Ovary (tissue), 10 donors: ENCODE measurements at regions of chr19 and their contacts with region 1.

Region 1: GRCh38 chr19:34319785-34320184 is 45.2 kb upstream of the GPI start:
- DNase-seq: peak in 1 of 5 donors; percentile 32
- H3K4me3 ChIP-seq: no peak overlapping the region
- H3K27ac ChIP-seq: no peak overlapping the region
- H3K4me1 ChIP-seq: peaks cover 19% of the 10 kb centered on the region
- H3K27me3 ChIP-seq: no peaks in the 10 kb centered on the region
- CTCF ChIP-seq: no peak
- EP300 ChIP-seq: no peak
- POLR2A ChIP-seq: no peak

Region 2: DNA sequence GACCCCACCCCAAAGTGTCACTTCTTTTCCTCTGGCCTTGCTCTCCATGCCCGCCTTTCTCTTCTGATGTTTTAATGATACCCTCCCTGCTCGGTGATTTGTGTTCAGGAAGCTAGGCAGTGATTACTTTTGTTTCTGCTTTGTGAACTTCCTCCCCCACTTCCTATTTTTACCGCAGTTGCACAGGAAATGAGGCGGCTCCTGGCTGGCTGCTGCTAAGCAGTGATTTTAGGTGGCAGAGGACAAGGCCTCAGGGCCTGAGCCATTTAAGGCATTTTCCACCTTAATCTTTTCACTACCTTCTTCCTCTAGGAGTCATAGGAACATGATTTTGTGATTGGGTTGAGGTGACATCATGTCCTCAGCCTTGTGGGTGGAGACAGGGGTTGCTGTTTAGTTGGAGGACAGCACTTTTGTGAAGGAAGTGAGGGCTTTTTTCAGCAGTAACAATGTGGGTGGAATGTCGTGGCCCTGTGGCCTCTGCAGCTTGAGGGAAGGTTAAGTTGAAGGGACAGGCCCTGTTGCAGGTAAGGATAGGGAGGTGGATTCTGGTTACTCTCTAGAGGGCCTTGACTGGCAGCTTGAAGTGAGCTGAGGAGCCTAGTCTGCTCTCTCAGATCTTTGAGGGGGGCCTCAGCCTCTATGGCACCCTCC is 49.7 kb before region 1 on chr19:
- intact Hi-C with region 1: loop called in 1 of 4 experiments (anchors 10 kb)
- DNase-seq: peak in 3 of 5 donors; percentile 25 to 44 (median 38)
- H3K4me3 ChIP-seq: no peak overlapping the region
- H3K27ac ChIP-seq: no peak overlapping the region
- H3K4me1 ChIP-seq: peaks cover 14% of the 10 kb centered on the region
- H3K27me3 ChIP-seq: no peaks in the 10 kb centered on the region
- CTCF ChIP-seq: no peak
- EP300 ChIP-seq: no peak
- POLR2A ChIP-seq: no peak

Region 3: GRCh38 chr19:34332027-34332760 is 12.4 kb after region 1 on chr19:
- intact Hi-C with region 1: no loop called
- DNase-seq: no peak
- H3K4me3 ChIP-seq: no peak overlapping the region
- H3K27ac ChIP-seq: no peak overlapping the region
- H3K4me1 ChIP-seq: peaks cover 2% of the 10 kb centered on the region
- H3K27me3 ChIP-seq: no peaks in the 10 kb centered on the region
- CTCF ChIP-seq: no peak
- EP300 ChIP-seq: no peak
- POLR2A ChIP-seq: no peak

Region 4: DNA sequence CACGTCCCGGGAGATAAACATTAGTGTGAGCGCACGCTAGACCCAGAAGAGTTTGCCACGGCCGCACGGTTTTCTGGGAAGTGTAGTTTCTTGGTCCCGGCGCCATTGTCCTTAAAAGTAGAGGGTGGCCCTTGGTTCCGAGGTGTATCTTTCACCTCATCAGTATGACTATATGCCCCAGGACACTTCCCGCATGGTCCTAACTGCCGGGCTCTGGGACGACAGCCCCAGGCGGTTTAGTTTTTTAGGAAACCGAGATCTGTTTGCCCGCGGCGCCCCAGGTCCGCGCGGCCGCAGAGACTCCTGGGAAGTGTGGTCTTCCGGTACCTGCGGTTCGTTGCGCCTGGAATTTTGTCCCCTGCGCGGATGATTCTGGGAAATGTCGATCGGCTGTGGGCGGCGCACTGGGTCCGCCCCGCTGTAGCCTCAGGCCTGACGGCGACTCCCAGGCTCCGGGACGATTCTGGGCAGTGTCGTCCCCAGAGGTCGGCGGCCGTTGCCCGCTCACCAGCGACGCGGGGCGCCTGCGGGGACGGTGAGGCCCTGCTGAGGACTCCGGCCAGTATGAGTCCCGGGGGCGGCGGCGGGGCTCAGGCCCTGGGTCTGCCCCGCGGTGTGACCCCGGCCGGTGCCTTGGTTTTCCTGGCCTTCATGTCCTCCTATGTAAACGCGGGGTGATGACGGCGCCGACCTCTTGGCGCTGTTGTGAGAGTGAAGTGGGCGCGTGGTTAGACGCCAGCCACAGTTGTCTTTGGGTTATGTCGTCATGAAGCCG is 414.2 kb after region 1 on chr19 and contains the start of gene ZNF181:
- intact Hi-C with region 1: no loop called
- DNase-seq: peak; percentile 79 to 89 (median 85)
- H3K4me3 ChIP-seq: peak within 1 kb of the TSS; percentile 70
- H3K27ac ChIP-seq: peak within 1 kb of the TSS; percentile 88 to 89
- H3K4me1 ChIP-seq: peaks cover 19% of the 10 kb centered on the region
- H3K27me3 ChIP-seq: no peaks in the 10 kb centered on the region
- CTCF ChIP-seq: no peak
- EP300 ChIP-seq: no peak
- POLR2A ChIP-seq: peak; percentile 71
- total RNA-seq, gene ZNF181: 20.1 to 39.2 (median 24.2) TPM